Heart left ventricle (tissue), 16 donors: ENCODE measurements at regions of chr11 and their contacts with region 1.

Region 1: DNA sequence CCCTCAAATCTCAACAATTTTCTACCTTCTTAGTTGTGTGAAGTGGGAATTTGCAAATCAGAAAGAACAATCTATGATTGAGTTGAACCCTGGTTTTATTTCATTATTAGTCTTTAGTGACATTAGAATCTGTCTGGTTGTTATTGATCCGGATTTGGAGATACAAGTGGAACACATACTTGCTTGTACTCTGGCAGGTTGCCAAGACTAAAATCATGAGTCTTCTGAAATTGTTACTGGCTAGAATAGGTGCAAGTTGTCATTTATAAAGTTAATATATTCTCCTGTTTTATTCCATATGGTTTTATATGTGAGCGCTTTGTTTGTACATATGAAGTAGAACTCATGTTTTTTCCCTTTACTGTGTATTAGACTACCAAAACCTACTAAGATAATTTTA is 23.0 kb downstream of the CCDC15 start:
- DNase-seq: no peak
- ATAC-seq: no peak
- H3K4me3 ChIP-seq: no peak overlapping the region
- H3K27ac ChIP-seq: no peak overlapping the region
- H3K4me1 ChIP-seq: no peaks in the 10 kb centered on the region
- H3K27me3 ChIP-seq: no peaks in the 10 kb centered on the region
- CTCF ChIP-seq: no peak
- POLR2A ChIP-seq: no peak

Region 2: GRCh38 chr11:125036933-125037332 is 59.9 kb after region 1 on chr11:
- intact Hi-C with region 1: no loop called
- DNase-seq: no peak
- ATAC-seq: no peak
- H3K4me3 ChIP-seq: no peak overlapping the region
- H3K27ac ChIP-seq: no peak overlapping the region
- H3K4me1 ChIP-seq: no peaks in the 10 kb centered on the region
- H3K27me3 ChIP-seq: no peaks in the 10 kb centered on the region
- CTCF ChIP-seq: no peak
- POLR2A ChIP-seq: no peak

Region 3: DNA sequence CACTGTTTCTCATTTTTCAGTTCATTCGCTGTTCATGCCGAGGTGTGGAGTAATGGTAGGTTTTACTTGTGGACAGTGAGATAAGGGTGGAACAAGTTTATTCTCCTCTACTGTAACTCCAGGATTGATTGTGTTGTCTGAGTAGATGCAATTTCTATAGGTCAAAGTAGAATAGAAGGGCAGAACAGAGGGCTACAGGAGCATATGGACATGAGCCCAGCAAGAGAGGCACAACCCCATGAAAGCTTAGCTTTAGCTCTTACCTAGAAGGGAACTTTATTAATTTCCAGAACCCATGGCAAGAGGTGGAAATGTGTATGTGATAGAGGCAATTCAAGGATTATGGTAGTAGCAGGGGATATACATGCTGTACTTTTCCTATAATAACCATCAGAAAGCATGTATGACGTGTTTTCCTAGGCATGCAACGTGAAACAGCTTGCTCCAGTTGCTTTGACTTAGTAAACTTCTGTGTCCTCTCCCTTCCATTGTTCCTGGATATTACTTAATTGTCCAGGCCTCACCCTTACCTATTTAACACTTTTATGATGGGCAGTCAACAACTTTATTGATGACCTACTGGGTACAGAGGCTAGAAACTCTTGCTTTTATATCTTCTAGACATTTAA is 72.3 kb after region 1 on chr11:
- intact Hi-C with region 1: loop called in 1 of 10 experiments (anchors 5 kb)
- DNase-seq: no peak
- ATAC-seq: no peak
- H3K4me3 ChIP-seq: no peak overlapping the region
- H3K27ac ChIP-seq: no peak overlapping the region
- H3K4me1 ChIP-seq: no peaks in the 10 kb centered on the region
- H3K27me3 ChIP-seq: no peaks in the 10 kb centered on the region
- CTCF ChIP-seq: no peak
- POLR2A ChIP-seq: no peak